Mammary epithelial cell (primary cell): ENCODE measurements at regions of chr12 and their contacts with region 1.

Region 1: DNA sequence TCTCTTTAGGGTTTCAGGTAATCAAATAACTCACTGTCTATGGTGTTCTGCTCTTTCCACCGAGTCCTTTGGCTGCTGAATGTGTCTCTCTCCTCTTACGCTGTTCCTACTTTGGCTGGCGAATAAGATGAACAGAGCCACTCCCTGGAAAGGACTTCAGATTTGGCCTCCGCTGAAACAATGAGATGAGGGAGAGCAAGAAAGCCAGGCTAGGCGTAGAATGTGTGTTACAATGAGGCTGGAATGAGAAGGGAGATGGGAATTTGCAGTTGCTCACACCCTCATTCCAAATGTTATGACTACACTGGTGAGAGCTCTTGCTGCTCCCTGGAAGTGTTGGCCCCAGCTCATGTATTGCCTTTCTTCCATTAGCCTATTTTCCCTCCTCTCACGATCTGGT is at the start of gene MFAP5:
- DNase-seq: no peak
- H3K4me3 ChIP-seq: no peak within 1 kb of the TSS
- H3K27ac ChIP-seq: no peak within 1 kb of the TSS
- H3K4me1 ChIP-seq: peaks cover 21% of the 10 kb centered on the region
- H3K27me3 ChIP-seq: no peaks in the 10 kb centered on the region
- CTCF ChIP-seq: no peak
- total RNA-seq, gene MFAP5: 2.4 to 7.5 TPM

Region 2: DNA sequence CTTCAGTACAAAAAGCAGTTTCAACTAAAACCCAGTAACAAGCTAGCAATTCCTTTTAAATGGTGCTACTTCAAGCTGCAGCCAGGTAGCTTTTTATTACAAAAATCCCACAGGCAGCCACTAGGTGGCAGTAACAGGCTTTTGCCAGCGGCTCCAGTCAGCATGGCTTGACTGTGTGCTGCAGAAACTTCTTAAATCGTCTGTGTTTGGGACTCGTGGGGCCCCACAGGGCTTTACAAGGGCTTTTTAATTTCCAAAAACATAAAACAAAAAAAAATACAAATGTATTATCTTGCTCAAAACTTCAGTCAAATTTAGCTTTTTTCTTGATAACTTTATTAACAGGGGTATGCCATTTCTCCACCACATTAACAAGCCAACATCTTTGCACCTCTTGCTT is 118.3 kb before region 1 on chr12:
- CTCF ChIA-PET with region 1: interaction called, 6 read pairs
- dilution Hi-C with region 1: no loop called
- in situ Hi-C with region 1: no loop called
- intact Hi-C with region 1: loop called (anchors 1 kb)
- DNase-seq: peak; percentile 44
- H3K4me3 ChIP-seq: no peak overlapping the region
- H3K27ac ChIP-seq: no peak overlapping the region
- H3K4me1 ChIP-seq: no peaks in the 10 kb centered on the region
- H3K27me3 ChIP-seq: no peaks in the 10 kb centered on the region
- CTCF ChIP-seq: peak; percentile 74 to 85

Region 3: DNA sequence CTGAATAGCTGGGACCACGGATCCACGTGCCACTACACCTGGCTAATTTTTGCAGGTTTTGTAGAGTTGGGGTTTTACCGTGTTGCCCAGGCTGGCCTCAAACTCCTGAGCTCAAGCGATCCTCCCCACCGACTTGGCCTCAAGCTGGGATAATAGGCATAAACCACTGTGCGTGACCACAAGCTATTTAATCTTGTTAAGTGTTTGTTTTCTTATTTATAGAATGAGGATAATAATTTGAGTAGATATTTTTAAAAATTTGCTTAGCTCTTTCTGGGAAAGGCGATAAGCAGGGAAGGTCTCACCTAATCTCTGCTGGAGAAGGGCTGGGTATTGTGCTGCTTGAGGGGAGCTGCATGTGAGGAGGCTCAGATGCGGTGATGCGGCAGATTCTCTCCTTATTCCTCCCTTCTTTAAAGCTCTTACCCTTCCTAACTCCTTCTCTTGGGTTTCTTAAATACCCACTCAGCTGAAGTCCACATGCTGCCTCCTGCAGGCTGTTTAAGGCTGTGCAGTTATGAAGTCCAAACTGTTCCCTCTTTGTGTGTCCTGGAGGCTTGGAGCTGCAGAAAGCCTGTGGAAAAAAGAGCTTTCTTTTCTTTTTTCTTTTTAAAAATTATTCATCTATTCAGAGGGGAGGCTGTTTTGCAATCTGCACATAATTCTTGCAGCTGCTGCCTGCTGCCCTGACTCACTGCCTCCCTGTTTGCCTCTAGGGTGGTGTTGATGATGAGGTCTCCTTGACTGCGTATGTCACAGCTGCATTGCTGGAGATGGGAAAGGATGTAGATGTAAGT is 197.8 kb after region 1 on chr12:
- CTCF ChIA-PET with region 1: interaction called, 53 read pairs
- dilution Hi-C with region 1: no loop called
- in situ Hi-C with region 1: loop called in 1 of 2 experiments (anchors 25 kb)
- intact Hi-C with region 1: loop called (anchors 1 kb)
- DNase-seq: peak; percentile 50
- H3K4me3 ChIP-seq: no peak overlapping the region
- H3K27ac ChIP-seq: no peak overlapping the region
- H3K4me1 ChIP-seq: no peaks in the 10 kb centered on the region
- H3K27me3 ChIP-seq: no peaks in the 10 kb centered on the region
- CTCF ChIP-seq: peak; percentile 82 to 88

Region 4: DNA sequence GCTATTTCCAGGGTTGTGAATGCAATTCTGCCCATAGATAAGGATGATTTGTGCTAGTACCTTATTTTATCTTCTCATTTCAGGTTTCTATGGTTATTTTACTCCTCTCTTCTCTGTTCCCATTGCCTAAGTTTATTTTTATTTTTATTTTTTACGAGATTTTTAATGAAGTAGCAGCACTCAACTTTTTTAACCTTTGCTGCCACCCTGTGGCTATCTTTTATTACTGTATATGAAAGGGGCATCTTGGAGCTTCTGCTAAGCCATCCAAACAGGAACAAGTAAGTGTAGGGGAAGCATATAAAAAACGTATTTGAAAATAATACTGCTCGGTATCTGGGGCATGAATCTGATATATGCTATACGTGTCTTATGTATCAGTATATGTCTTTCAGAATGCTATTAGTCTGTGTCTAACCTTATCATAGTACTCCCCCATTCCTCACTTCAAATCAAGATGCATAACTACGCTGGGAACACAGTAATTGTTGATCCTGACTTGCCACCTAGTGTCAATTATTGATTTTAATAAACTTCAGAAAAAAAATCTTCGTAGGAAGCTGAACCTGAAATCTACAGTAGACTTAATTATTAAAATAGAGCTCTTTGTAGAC is 387.0 kb after region 1 on chr12:
- CTCF ChIA-PET with region 1: interaction called, 32 read pairs
- dilution Hi-C with region 1: no loop called
- in situ Hi-C with region 1: loop called (anchors 10 kb)
- intact Hi-C with region 1: loop called (anchors 2 kb)
- DNase-seq: peak; percentile 28
- H3K4me3 ChIP-seq: no peak overlapping the region
- H3K27ac ChIP-seq: no peak overlapping the region
- H3K4me1 ChIP-seq: peaks cover 6% of the 10 kb centered on the region
- H3K27me3 ChIP-seq: no peaks in the 10 kb centered on the region
- CTCF ChIP-seq: peak; percentile 50 to 54